ENCODE measurements at regions of chr13 and their contacts with region 1.

Region 1: GRCh38 chr13:32315238-32316027 is at the starts of genes BRCA2 and ZAR1L:
- ATAC-seq: peak; percentile 91 to 99 (median 99)
- H3K4me3 ChIP-seq: peak within 1 kb of the TSS; percentile 48 to 76 (median 68)
- H3K27ac ChIP-seq: peak within 1 kb of the TSS; percentile 86 to 90
- H3K4me1 ChIP-seq: peaks cover 7% of the 10 kb centered on the region in 2 donors
- total RNA-seq, gene BRCA2: 0.54 to 9.1 (median 1.7) TPM
- total RNA-seq, gene ZAR1L: 0.23 to 0.52 TPM in 2 of 8 experiments, not detected in the others

Region 2: GRCh38 chr13:31909864-31910551 is 405.4 kb before region 1 on chr13:
- in situ Hi-C with region 1: loop called in 1 of 9 experiments (anchors 25 kb)
- ATAC-seq: peak in 6 of 8 experiments; percentile 3 to 41 (median 16)
- H3K4me3 ChIP-seq: no peak overlapping the region
- H3K27ac ChIP-seq: no peak overlapping the region
- H3K4me1 ChIP-seq: peaks cover 5 to 26% of the 10 kb centered on the region in 2 donors

Region 3: DNA sequence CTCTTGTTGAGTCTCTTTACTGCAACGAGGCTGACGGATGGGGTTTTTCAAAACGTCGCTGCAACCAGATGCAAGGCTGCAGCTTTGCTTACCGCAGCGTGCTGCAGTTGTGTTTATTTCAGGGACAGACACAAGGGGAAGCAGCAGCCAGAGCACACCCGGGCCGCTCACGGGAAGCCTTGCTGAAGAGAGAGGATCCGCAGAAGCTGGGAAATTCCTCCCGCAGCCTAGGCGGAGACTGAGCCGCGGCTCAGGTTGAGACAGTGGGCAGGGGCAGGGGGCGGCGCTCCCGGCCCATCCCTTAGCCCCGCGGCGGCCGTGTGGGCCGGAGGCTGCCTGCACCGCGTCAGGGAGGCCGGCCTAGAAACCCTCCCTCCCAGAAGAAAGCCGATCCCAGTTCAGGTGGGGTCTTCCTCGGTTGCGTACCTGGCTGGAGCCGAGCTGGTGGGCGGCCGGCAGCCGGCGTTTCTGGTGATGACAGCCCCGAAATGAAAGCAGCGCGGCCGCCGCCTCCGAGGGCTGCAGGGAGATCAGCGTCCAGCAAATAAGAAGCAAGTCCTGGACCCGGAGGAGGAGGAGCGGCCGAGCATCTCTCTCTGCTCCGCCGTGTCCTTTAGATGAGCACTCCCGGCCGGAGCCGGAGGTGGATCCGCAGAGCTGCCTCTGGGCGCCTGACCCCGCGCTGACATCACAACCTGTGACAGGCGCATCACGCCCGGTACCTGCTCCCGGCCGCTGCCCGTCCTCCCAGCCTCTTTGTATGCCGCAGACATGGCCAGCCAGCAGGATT is 284.2 kb before region 1 on chr13 and contains the start of gene FRY:
- in situ Hi-C with region 1: loop called in 1 of 9 experiments (anchors 25 kb)
- ATAC-seq: peak; percentile 83 to 93 (median 92)
- H3K4me3 ChIP-seq: peak within 1 kb of the TSS; percentile 65 to 92 (median 68)
- H3K27ac ChIP-seq: peak within 1 kb of the TSS; percentile 87 to 92
- H3K4me1 ChIP-seq: peaks cover 18 to 53% of the 10 kb centered on the region in 2 donors
- total RNA-seq, gene FRY: 6.0 to 54.0 (median 35.7) TPM